ENCODE measurements at regions of chr15 and their contacts with region 1.

Region 1: GRCh38 chr15:101489236-101489632 is 273 bp downstream of the PCSK6 start:
- DNase-seq: no peak
- ATAC-seq: peak; percentile 36 to 41

Region 2: DNA sequence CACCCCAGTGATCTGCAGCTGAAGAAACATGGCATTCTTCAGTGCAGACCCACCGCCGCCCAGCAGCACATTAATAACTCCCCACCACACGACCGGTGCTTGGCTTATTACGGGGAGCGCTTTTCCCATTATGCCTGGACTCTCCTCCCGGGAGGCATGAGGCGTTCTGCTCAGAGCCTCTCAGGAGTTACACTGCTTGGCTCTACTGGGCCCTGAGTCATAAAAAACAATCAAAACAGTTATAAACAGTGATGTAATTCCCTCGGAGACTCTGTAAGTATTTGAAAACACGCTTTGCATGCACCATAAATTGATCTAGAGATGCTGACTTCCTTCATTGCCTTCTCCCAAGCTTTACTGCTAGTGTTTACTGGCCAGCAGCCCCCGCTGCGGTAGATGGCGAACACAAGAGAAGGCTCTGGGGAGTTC is 117.1 kb before region 1 on chr15:
- intact Hi-C with region 1: loop called in 1 of 2 experiments (anchors 10 kb)
- DNase-seq: no peak
- ATAC-seq: peak in 1 of 2 donors; percentile 45

Measured in left cardiac atrium (tissue), 4 donors.